B cell (primary cell): ENCODE measurements at regions of chr2 and their contacts with region 1.

Region 1: DNA sequence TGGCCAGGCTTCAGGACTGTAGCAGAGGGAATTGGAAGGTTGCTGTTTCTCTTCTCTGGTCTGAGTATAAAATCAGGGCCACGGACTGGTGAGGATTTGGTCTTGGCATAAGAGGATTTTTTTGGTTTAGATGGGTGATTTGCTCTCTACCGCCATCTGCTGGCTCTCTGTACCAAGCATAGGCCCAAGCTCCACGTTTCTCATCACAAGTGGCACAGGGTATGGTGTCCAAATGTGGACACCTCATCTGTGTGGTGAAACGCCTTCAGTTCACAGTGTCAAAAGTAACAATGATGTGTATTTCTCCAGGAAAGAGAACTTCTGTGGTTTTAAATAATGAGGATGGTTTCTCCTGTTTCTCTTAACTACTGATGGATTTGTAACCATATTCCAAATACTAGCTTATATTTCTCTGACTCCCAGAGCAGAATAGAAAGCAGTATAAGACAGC is 115.1 kb downstream of the EML6 start:
- DNase-seq: peak; percentile 78
- ATAC-seq: peak; percentile 83
- H3K4me3 ChIP-seq: no peak overlapping the region
- H3K4me3 Mint-ChIP-seq: no peak overlapping the region
- H3K27ac ChIP-seq: no peak overlapping the region
- H3K27ac Mint-ChIP-seq: peak overlapping the region; percentile 46
- H3K4me1 ChIP-seq: peaks cover 0 to 4% of the 10 kb centered on the region in 2 donors
- H3K4me1 Mint-ChIP-seq: peaks cover 4% of the 10 kb centered on the region
- H3K27me3 ChIP-seq: no peaks in the 10 kb centered on the region
- H3K27me3 Mint-ChIP-seq: no peaks in the 10 kb centered on the region
- CTCF ChIP-seq: peak; percentile 97

Region 2: GRCh38 chr2:54657664-54658083 is 180.9 kb before region 1 on chr2:
- CTCF ChIA-PET with region 1: interaction called, 19 read pairs
- POLR2A ChIA-PET with region 1: no interaction called
- intact Hi-C with region 1: no loop called
- DNase-seq: peak; percentile 42
- ATAC-seq: peak; percentile 65
- H3K4me3 ChIP-seq: no peak overlapping the region
- H3K4me3 Mint-ChIP-seq: no peak overlapping the region
- H3K27ac ChIP-seq: no peak overlapping the region
- H3K27ac Mint-ChIP-seq: peak overlapping the region; percentile 53
- H3K4me1 ChIP-seq: no peaks in the 10 kb centered on the region
- H3K4me1 Mint-ChIP-seq: no peaks in the 10 kb centered on the region
- H3K27me3 ChIP-seq: no peaks in the 10 kb centered on the region
- H3K27me3 Mint-ChIP-seq: no peaks in the 10 kb centered on the region
- CTCF ChIP-seq: peak; percentile 67

Region 3: GRCh38 chr2:54665436-54665856 is 173.2 kb before region 1 on chr2:
- CTCF ChIA-PET with region 1: interaction called, 46 read pairs
- POLR2A ChIA-PET with region 1: no interaction called
- intact Hi-C with region 1: no loop called
- DNase-seq: peak; percentile 65
- ATAC-seq: peak; percentile 60
- H3K4me3 ChIP-seq: no peak overlapping the region
- H3K4me3 Mint-ChIP-seq: no peak overlapping the region
- H3K27ac ChIP-seq: no peak overlapping the region
- H3K27ac Mint-ChIP-seq: no peak overlapping the region
- H3K4me1 ChIP-seq: no peaks in the 10 kb centered on the region
- H3K4me1 Mint-ChIP-seq: no peaks in the 10 kb centered on the region
- H3K27me3 ChIP-seq: no peaks in the 10 kb centered on the region
- H3K27me3 Mint-ChIP-seq: no peaks in the 10 kb centered on the region
- CTCF ChIP-seq: peak; percentile 76

Region 4: GRCh38 chr2:54673501-54673998 is 165.1 kb before region 1 on chr2:
- CTCF ChIA-PET with region 1: interaction called, 11 read pairs
- POLR2A ChIA-PET with region 1: no interaction called
- intact Hi-C with region 1: no loop called
- DNase-seq: peak; percentile 44
- ATAC-seq: peak; percentile 62
- H3K4me3 ChIP-seq: peak overlapping the region in 2 of 5 experiments; percentile 8 to 39
- H3K4me3 Mint-ChIP-seq: peak overlapping the region; percentile 79
- H3K27ac ChIP-seq: no peak overlapping the region
- H3K27ac Mint-ChIP-seq: peak overlapping the region; percentile 75
- H3K4me1 ChIP-seq: peaks cover 20 to 23% of the 10 kb centered on the region in 2 donors
- H3K4me1 Mint-ChIP-seq: peaks cover 35% of the 10 kb centered on the region
- H3K27me3 ChIP-seq: no peaks in the 10 kb centered on the region
- H3K27me3 Mint-ChIP-seq: no peaks in the 10 kb centered on the region
- CTCF ChIP-seq: no peak

Region 5: GRCh38 chr2:54755641-54756326 is 82.8 kb before region 1 on chr2:
- CTCF ChIA-PET with region 1: interaction called, 43 read pairs
- POLR2A ChIA-PET with region 1: no interaction called
- intact Hi-C with region 1: loop called (anchors 1 kb)
- DNase-seq: peak; percentile 61
- ATAC-seq: peak; percentile 67
- H3K4me3 ChIP-seq: peak overlapping the region in 3 of 5 experiments; percentile 7 to 52 (median 15)
- H3K4me3 Mint-ChIP-seq: peak overlapping the region; percentile 76
- H3K27ac ChIP-seq: peak overlapping the region; percentile 25 to 52
- H3K27ac Mint-ChIP-seq: peak overlapping the region; percentile 80
- H3K4me1 ChIP-seq: peaks cover 31 to 38% of the 10 kb centered on the region in 2 donors
- H3K4me1 Mint-ChIP-seq: peaks cover 45% of the 10 kb centered on the region
- H3K27me3 ChIP-seq: no peaks in the 10 kb centered on the region
- H3K27me3 Mint-ChIP-seq: no peaks in the 10 kb centered on the region
- CTCF ChIP-seq: no peak

Region 6: DNA sequence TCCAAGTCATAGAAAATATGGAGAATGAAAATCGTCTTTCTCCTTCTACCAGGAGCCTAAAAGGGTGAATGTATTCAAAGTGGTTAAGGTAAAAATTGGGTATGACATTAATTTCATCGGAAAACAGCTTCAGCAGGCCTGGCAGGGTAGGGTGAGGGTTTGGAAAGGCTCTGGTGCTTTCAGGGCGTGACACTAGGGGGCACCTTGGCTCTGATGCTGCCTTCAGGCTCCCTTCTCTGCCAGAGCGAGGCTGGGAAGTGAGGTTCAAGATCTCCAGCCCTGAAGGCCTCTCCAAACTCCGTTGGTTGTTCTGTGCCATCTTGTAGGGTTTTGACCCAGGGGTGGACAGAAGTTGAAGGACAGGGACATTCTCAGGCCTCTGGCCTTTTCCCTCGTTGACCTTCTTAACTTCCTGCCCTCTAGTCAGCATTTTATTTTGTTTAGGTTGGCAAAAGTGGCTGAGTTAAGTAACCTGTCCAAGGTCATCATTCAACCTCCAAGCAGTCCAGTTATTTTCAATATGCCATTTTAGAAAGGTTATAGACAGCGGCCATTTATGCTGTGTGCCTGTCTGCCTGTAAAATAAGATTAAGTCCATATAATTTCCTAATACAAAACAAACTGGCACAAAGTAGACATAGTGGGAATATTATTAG is 74.8 kb before region 1 on chr2:
- CTCF ChIA-PET with region 1: interaction called, 12 read pairs
- POLR2A ChIA-PET with region 1: no interaction called
- intact Hi-C with region 1: no loop called
- DNase-seq: no peak
- ATAC-seq: no peak
- H3K4me3 ChIP-seq: no peak overlapping the region
- H3K4me3 Mint-ChIP-seq: no peak overlapping the region
- H3K27ac ChIP-seq: no peak overlapping the region
- H3K27ac Mint-ChIP-seq: no peak overlapping the region
- H3K4me1 ChIP-seq: peaks cover 7 to 13% of the 10 kb centered on the region in 2 donors
- H3K4me1 Mint-ChIP-seq: peaks cover 22% of the 10 kb centered on the region
- H3K27me3 ChIP-seq: no peaks in the 10 kb centered on the region
- H3K27me3 Mint-ChIP-seq: no peaks in the 10 kb centered on the region
- CTCF ChIP-seq: no peak

Region 7: DNA sequence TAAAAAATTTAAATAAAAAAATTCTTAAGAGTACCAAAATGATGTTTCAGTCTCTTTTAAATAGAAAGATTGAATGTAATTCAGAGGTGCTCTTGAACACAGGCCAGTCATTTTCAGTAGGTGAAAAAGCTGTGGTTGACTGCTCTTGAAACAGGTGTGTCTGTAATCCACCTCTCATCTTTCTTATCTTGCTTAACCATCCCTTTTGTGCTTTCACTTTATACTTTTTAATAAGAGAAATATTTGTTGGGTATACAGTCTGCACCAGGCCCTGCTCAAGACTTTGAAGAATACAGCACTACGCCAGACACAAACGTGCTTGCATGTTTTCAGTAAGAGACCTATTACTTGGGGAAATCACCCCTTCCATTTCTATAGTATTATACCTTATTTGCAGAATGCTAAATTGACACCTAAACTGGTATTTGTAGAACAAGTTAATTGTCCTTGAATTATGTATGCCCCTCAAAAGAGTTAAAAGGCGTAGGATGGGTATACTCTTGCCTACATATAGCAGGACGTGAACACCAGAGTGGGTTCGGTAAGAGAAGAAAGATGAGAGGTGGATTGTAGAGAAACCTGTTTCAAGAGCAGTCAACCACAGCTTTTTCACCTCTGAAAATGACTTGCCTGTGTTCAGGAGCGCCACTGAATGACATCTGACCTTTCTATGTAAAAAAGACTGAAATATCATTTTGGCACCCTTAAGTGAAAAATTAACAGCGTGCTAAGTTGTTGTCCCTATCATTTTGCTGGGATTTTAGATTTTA is 215.7 kb after region 1 on chr2:
- CTCF ChIA-PET with region 1: no interaction called
- POLR2A ChIA-PET with region 1: no interaction called
- intact Hi-C with region 1: no loop called
- DNase-seq: no peak
- ATAC-seq: no peak
- H3K4me3 ChIP-seq: no peak overlapping the region
- H3K4me3 Mint-ChIP-seq: peak overlapping the region; percentile 62
- H3K27ac ChIP-seq: peak overlapping the region; percentile 23 to 65
- H3K27ac Mint-ChIP-seq: peak overlapping the region; percentile 67
- H3K4me1 ChIP-seq: peaks cover 35 to 43% of the 10 kb centered on the region in 2 donors
- H3K4me1 Mint-ChIP-seq: peaks cover 49% of the 10 kb centered on the region
- H3K27me3 ChIP-seq: no peaks in the 10 kb centered on the region
- H3K27me3 Mint-ChIP-seq: no peaks in the 10 kb centered on the region
- CTCF ChIP-seq: no peak